Lower leg skin (tissue), 4 donors: ENCODE measurements at regions of chr2 and their contacts with region 1.

Region 1: GRCh38 chr2:235358981-235359471 is 134.8 kb upstream of the AGAP1 start:
- DNase-seq: peak in 1 of 2 donors; percentile 75
- H3K4me3 ChIP-seq: no peak overlapping the region
- CTCF ChIP-seq: no peak
- POLR2A ChIP-seq: no peak

Region 2: GRCh38 chr2:235449568-235449967 is 90.5 kb after region 1 on chr2:
- intact Hi-C with region 1: loop called (anchors 1 kb)
- DNase-seq: no peak
- H3K4me3 ChIP-seq: no peak overlapping the region
- CTCF ChIP-seq: no peak
- POLR2A ChIP-seq: no peak

Region 3: GRCh38 chr2:235595422-235596010 is 236.5 kb after region 1 on chr2:
- intact Hi-C with region 1: no loop called
- DNase-seq: peak; percentile 76 to 95
- H3K4me3 ChIP-seq: no peak overlapping the region
- CTCF ChIP-seq: peak in 1 of 3 donors; percentile 46
- POLR2A ChIP-seq: no peak